Prostate gland (tissue), 2 donors: ENCODE measurements at regions of chr11 and their contacts with region 1.

Region 1: DNA sequence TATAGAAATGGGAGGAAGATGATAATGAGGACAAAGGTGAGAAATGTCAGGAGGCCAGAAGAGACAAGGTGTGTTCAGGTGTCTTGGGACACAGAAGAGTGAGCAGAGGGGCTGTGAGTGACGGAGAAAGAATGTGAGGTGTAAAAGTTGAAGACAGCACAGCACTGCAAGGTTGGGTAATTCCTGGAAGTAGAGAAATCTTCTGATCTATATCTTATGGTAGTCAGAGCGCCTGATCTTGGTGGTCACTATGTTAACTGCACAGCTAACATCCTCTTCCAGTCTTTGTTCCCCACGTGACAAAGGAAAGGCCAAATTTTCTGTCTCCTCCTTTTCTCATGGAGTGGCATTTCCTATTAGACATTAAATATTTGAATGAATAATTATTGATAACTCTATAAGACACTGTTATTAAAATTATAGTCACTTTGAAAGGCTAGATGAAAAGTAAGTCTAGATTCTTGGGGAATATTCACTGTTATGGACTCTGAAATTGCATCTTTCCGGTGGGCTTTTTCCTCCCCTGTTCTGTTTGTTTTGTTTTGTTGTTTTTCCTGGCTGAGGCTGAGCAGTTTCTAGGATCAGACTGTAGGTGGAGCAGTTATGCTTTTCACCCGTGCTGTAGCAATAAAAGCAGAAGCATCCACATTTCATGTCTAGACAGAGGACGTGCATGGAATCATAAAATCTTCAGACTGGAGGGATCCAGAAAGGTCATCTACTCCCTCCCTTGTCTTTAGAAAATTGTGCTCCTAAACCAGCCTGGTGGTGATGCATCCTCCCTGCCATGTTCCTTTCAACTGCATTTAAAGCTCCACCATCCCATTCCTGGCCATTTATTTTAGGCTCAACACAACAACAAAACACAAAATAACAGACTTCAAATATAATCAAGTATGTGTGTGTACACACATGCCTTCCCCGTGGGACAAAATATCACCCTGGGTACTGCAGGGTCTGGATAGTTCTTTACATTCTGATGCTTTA is 26.6 kb downstream of the SC5D start:
- DNase-seq: peak; percentile 47
- H3K4me3 ChIP-seq: no peak overlapping the region
- H3K27ac ChIP-seq: no peak overlapping the region
- H3K4me1 ChIP-seq: no peaks in the 10 kb centered on the region
- H3K27me3 ChIP-seq: no peaks in the 10 kb centered on the region
- CTCF ChIP-seq: peak; percentile 55 to 88 (median 74)
- POLR2A ChIP-seq: no peak

Region 2: GRCh38 chr11:121112498-121113455 is 206.4 kb before region 1 on chr11:
- intact Hi-C with region 1: no loop called
- DNase-seq: peak; percentile 67
- H3K4me3 ChIP-seq: no peak overlapping the region
- H3K27ac ChIP-seq: no peak overlapping the region
- H3K4me1 ChIP-seq: no peaks in the 10 kb centered on the region
- H3K27me3 ChIP-seq: no peaks in the 10 kb centered on the region
- CTCF ChIP-seq: peak in 3 of 4 experiments; percentile 38 to 69 (median 64)
- POLR2A ChIP-seq: no peak

Region 3: DNA sequence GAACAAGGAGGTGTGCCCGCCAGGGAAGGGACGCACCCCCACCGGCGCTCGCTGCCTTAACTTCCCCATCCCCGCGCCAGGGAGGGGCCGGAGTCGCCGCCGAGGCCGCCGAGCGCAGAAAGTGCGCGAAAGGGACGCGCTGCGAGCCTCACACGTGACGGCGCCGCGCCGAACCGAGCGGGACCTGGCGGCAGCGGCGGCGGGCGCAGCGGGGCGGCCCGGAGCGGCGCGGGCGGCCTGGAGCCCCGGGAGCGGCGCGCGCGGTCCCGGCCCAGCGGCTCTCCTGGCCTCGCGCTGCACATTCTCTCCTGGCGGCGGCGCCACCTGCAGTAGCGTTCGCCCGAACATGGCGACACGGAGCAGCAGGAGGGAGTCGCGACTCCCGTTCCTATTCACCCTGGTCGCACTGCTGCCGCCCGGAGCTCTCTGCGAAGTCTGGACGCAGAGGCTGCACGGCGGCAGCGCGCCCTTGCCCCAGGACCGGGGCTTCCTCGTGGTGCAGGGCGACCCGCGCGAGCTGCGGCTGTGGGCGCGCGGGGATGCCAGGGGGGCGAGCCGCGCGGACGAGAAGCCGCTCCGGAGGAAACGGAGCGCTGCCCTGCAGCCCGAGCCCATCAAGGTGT is 133.0 kb after region 1 on chr11 and contains the start of gene SORL1:
- intact Hi-C with region 1: loop called (anchors 10 kb)
- DNase-seq: peak; percentile 85
- H3K4me3 ChIP-seq: peak within 1 kb of the TSS; percentile 84 to 85
- H3K27ac ChIP-seq: peak within 1 kb of the TSS; percentile 76 to 82
- H3K4me1 ChIP-seq: no peaks in the 10 kb centered on the region
- H3K27me3 ChIP-seq: no peaks in the 10 kb centered on the region
- CTCF ChIP-seq: peak; percentile 52 to 83 (median 70)
- POLR2A ChIP-seq: no peak
- total RNA-seq, gene SORL1: 77.4 to 97.6 TPM